ENCODE measurements at regions of chr15 and their contacts with region 1.

Region 1: GRCh38 chr15:55407949-55408791 is at the starts of genes CCPG1 and PIERCE2:
- DNase-seq: peak; percentile 95
- H3K4me3 ChIP-seq: peak within 1 kb of the TSS; percentile 76
- H3K27ac ChIP-seq: peak within 1 kb of the TSS; percentile 65
- H3K4me1 ChIP-seq: peaks cover 44% of the 10 kb centered on the region
- CTCF ChIP-seq: peak; percentile 62
- total RNA-seq, gene CCPG1: 9.2 and 9.8 TPM in 2 replicates
- total RNA-seq, gene PIERCE2: 0.51 and 1.3 TPM in 2 replicates

Region 2: DNA sequence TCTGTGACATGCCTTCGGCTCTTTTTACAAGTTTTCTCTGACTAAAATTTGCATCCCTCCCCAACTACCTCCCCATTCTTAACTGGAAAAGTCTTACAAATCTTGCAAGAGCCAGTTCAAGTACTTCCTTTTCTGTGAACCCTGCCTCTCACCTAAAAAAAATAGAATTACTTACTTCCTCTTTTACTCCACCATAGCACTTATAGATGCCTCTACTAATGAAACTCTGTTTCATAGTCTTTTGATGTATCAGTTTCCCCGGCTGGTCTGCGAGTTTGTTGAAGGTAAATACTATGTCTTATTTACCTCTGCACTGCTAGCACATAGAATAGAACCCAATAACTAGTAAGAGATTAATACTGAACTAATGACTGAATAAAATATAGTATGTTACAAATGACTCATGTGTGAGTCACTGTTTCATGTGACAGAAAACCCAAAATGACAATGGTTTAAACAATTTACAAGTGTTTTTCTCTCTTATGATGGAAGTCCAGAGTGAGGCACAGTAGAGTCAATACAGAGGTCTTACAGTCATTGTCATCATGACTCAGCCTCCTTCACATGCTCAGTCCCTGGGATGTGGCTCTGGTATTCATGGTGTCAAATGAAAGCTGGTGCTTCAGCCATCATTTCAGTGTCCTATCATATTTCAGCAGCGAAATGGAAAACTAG is 604.9 kb before region 1 on chr15:
- CTCF ChIA-PET with region 1: no interaction called
- POLR2A ChIA-PET with region 1: no interaction called
- intact Hi-C with region 1: no loop called
- DNase-seq: peak; percentile 9
- H3K4me3 ChIP-seq: no peak overlapping the region
- H3K27ac ChIP-seq: no peak overlapping the region
- H3K4me1 ChIP-seq: peaks cover 3% of the 10 kb centered on the region
- CTCF ChIP-seq: no peak

Region 3: GRCh38 chr15:55196458-55197361 is 211.5 kb before region 1 on chr15 and contains the start of gene RSL24D1:
- CTCF ChIA-PET with region 1: no interaction called
- POLR2A ChIA-PET with region 1: no interaction called
- intact Hi-C with region 1: loop called (anchors 5 kb)
- DNase-seq: peak; percentile 99
- H3K4me3 ChIP-seq: peak within 1 kb of the TSS; percentile 98
- H3K27ac ChIP-seq: peak within 1 kb of the TSS; percentile 96
- H3K4me1 ChIP-seq: peaks cover 33% of the 10 kb centered on the region
- CTCF ChIP-seq: peak; percentile 67
- total RNA-seq, gene RSL24D1: 117 and 118 TPM in 2 replicates

Region 4: DNA sequence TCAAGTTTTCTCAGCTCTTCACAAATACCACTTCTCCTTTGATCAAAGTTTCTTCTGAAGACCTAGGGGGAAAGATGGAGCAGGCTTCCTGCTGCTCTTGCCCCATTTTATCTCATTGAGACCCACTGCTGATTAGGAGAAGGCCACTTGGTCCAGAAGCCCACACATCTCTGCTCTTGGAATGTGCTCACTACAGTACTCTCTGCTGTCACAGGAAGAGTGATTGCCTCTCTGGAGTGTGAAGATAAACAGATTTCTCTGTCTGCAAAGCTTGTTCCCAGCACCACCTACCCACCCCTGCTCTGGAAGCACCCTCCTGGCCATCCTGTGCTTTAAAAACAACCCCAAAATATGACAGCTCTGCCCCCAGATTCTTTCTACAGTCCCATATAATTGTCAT is 376.1 kb after region 1 on chr15:
- CTCF ChIA-PET with region 1: no interaction called
- POLR2A ChIA-PET with region 1: no interaction called
- intact Hi-C with region 1: no loop called
- DNase-seq: no peak
- H3K4me3 ChIP-seq: no peak overlapping the region
- H3K27ac ChIP-seq: no peak overlapping the region
- H3K4me1 ChIP-seq: no peaks in the 10 kb centered on the region
- CTCF ChIP-seq: no peak